Activated B cell treated with CpG ODN at 0.5 μM for 24 hours (primary cell): ENCODE measurements at regions of chr18 and their contacts with region 1.

Region 1: GRCh38 chr18:27604583-27604982 is 419.5 kb upstream of the CHST9 start:
- DNase-seq: no peak
- ATAC-seq: no peak
- H3K4me3 Mint-ChIP-seq: no peak overlapping the region
- H3K27ac Mint-ChIP-seq: no peak overlapping the region
- H3K4me1 Mint-ChIP-seq: no peaks in the 10 kb centered on the region
- H3K27me3 Mint-ChIP-seq: no peaks in the 10 kb centered on the region
- CTCF ChIP-seq: no peak

Region 2: GRCh38 chr18:27017901-27018500 is 586.6 kb before region 1 on chr18:
- CTCF ChIA-PET with region 1: no interaction called
- POLR2A ChIA-PET with region 1: no interaction called
- intact Hi-C with region 1: loop called (anchors 5 kb)
- DNase-seq: no peak
- ATAC-seq: no peak
- H3K4me3 Mint-ChIP-seq: no peak overlapping the region
- H3K27ac Mint-ChIP-seq: no peak overlapping the region
- H3K4me1 Mint-ChIP-seq: no peaks in the 10 kb centered on the region
- H3K27me3 Mint-ChIP-seq: no peaks in the 10 kb centered on the region
- CTCF ChIP-seq: no peak

Region 3: GRCh38 chr18:27652480-27653121 is 48.0 kb after region 1 on chr18:
- CTCF ChIA-PET with region 1: no interaction called
- POLR2A ChIA-PET with region 1: no interaction called
- intact Hi-C with region 1: no loop called
- DNase-seq: no peak
- ATAC-seq: no peak
- H3K4me3 Mint-ChIP-seq: no peak overlapping the region
- H3K27ac Mint-ChIP-seq: no peak overlapping the region
- H3K4me1 Mint-ChIP-seq: no peaks in the 10 kb centered on the region
- H3K27me3 Mint-ChIP-seq: no peaks in the 10 kb centered on the region
- CTCF ChIP-seq: no peak